CD8-positive, alpha-beta T cell (primary cell): ENCODE measurements at regions of chr5 and their contacts with region 1.

Region 1: GRCh38 chr5:95554647-95555548 is at the starts of genes ARSK and SKIC3:
- DNase-seq: peak; percentile 80 to 99 (median 91)
- ATAC-seq: peak; percentile 86
- H3K4me3 ChIP-seq: peak within 1 kb of the TSS; percentile 64 to 77
- H3K4me3 Mint-ChIP-seq: peak within 1 kb of the TSS; percentile 96
- H3K27ac ChIP-seq: peak within 1 kb of the TSS; percentile 74 to 84
- H3K27ac Mint-ChIP-seq: peak within 1 kb of the TSS; percentile 98
- H3K4me1 ChIP-seq: peaks cover 18% of the 10 kb centered on the region
- H3K4me1 Mint-ChIP-seq: peaks cover 47% of the 10 kb centered on the region
- H3K27me3 ChIP-seq: no peaks in the 10 kb centered on the region
- H3K27me3 Mint-ChIP-seq: no peaks in the 10 kb centered on the region
- CTCF ChIP-seq: no peak
- total RNA-seq, gene ARSK: 2.6 to 3.1 TPM
- total RNA-seq, gene SKIC3: 46.7 to 51.8 TPM

Region 2: GRCh38 chr5:94618493-94619328 is 936.2 kb before region 1 on chr5 and contains the starts of genes KIAA0825 and SLF1:
- CTCF ChIA-PET with region 1: no interaction called
- POLR2A ChIA-PET with region 1: no interaction called
- intact Hi-C with region 1: loop called in 1 of 2 experiments (anchors 5 kb)
- DNase-seq: peak; percentile 68 to 91 (median 86)
- ATAC-seq: peak; percentile 87
- H3K4me3 ChIP-seq: peak within 1 kb of the TSS; percentile 72 to 80
- H3K4me3 Mint-ChIP-seq: peak within 1 kb of the TSS; percentile 94
- H3K27ac ChIP-seq: peak within 1 kb of the TSS; percentile 59 to 74
- H3K27ac Mint-ChIP-seq: peak within 1 kb of the TSS; percentile 89
- H3K4me1 ChIP-seq: peaks cover 22% of the 10 kb centered on the region
- H3K4me1 Mint-ChIP-seq: peaks cover 53% of the 10 kb centered on the region
- H3K27me3 ChIP-seq: no peaks in the 10 kb centered on the region
- H3K27me3 Mint-ChIP-seq: no peaks in the 10 kb centered on the region
- CTCF ChIP-seq: no peak
- total RNA-seq, gene KIAA0825: 0.89 to 1.0 TPM
- total RNA-seq, gene SLF1: 10.0 to 11.1 TPM

Region 3: GRCh38 chr5:95572016-95572415 is 17.1 kb after region 1 on chr5:
- CTCF ChIA-PET with region 1: no interaction called
- POLR2A ChIA-PET with region 1: no interaction called
- intact Hi-C with region 1: no loop called
- DNase-seq: no peak
- ATAC-seq: no peak
- H3K4me3 ChIP-seq: no peak overlapping the region
- H3K4me3 Mint-ChIP-seq: no peak overlapping the region
- H3K27ac ChIP-seq: no peak overlapping the region
- H3K27ac Mint-ChIP-seq: no peak overlapping the region
- H3K4me1 ChIP-seq: no peaks in the 10 kb centered on the region
- H3K4me1 Mint-ChIP-seq: peaks cover 2% of the 10 kb centered on the region
- H3K27me3 ChIP-seq: no peaks in the 10 kb centered on the region
- H3K27me3 Mint-ChIP-seq: no peaks in the 10 kb centered on the region
- CTCF ChIP-seq: no peak

Region 4: DNA sequence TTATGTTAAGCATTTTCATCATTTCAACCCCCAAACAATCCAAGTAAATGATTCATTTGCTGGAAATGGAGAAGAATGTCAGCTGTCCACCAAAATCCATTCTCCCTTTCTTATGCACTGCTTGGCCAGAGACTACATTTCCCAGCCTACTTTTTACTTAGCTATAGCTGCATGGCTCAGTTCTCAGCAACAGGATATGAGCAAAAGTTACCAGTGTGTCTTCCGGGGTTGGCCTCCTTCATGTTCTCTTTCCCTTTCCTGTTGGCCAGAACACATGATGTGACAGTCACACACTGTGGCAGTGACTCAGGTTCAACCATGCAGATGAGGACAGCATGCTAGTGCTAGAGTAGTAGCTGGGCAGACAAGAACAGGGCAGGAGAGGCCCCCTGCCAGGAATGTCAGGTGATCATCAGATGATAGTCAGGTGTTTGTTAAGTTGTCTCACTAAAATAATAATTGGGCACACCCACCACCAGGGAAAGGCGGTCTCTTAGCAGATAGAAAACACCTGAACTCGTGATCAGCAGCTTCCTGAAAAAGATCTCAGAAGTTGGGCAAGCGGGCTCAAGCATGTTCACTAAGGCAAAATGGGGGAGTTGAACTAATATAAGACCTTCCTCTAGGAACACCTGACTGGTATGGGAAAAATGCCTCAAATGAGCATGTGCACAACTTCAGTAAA is 77.2 kb after region 1 on chr5:
- CTCF ChIA-PET with region 1: no interaction called
- POLR2A ChIA-PET with region 1: interaction called, 4 read pairs
- intact Hi-C with region 1: loop called in 1 of 2 experiments (anchors 2 kb)
- DNase-seq: peak; percentile 27 to 81 (median 64)
- ATAC-seq: peak; percentile 97
- H3K4me3 ChIP-seq: no peak overlapping the region
- H3K4me3 Mint-ChIP-seq: no peak overlapping the region
- H3K27ac ChIP-seq: peak overlapping the region; percentile 39 to 44
- H3K27ac Mint-ChIP-seq: peak overlapping the region; percentile 95
- H3K4me1 ChIP-seq: peaks cover 14% of the 10 kb centered on the region
- H3K4me1 Mint-ChIP-seq: peaks cover 15% of the 10 kb centered on the region
- H3K27me3 ChIP-seq: peaks cover 0 to 3% of the 10 kb centered on the region in 2 experiments
- H3K27me3 Mint-ChIP-seq: no peaks in the 10 kb centered on the region
- CTCF ChIP-seq: no peak

Region 5: DNA sequence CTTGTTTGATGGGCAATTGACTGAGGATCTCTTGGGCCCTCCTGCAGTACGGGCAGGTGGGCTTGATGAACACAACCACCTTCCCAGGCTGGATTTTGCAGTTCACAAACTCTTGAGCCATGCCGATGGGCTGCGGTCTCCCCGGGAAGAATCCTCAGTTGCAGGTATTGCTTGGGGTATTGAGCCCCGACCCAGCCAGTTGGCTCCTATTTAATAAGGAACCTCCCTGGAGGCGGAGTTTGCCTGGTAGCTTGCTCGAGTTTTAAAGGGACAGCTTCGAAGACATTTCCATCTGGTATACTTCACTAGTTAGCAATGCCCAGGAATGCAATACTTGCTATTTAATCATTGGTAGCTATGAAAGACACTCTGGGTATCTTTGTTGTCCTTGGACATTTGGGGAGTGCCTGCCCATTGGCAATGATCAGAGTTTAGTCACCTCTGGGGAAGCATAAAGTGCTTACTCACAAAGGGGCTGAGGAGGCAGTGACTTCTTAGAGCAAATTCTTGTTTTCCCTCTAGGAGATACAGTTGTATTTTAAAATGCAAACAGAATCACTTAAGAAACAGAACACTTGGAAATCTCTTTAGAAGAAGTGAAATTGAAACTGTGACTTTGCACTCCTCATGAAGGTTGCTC is 267.8 kb after region 1 on chr5 and contains the start of gene GLRX:
- CTCF ChIA-PET with region 1: no interaction called
- POLR2A ChIA-PET with region 1: no interaction called
- intact Hi-C with region 1: loop called (anchors 2 to 10 kb)
- DNase-seq: peak in 8 of 9 experiments; percentile 42 to 75 (median 60)
- ATAC-seq: peak; percentile 39
- H3K4me3 ChIP-seq: peak within 1 kb of the TSS; percentile 89 to 91
- H3K4me3 Mint-ChIP-seq: peak within 1 kb of the TSS; percentile 98
- H3K27ac ChIP-seq: peak within 1 kb of the TSS; percentile 65 to 84
- H3K27ac Mint-ChIP-seq: peak within 1 kb of the TSS; percentile 96
- H3K4me1 ChIP-seq: peaks cover 52% of the 10 kb centered on the region
- H3K4me1 Mint-ChIP-seq: peaks cover 66% of the 10 kb centered on the region
- H3K27me3 ChIP-seq: no peaks in the 10 kb centered on the region
- H3K27me3 Mint-ChIP-seq: no peaks in the 10 kb centered on the region
- CTCF ChIP-seq: no peak
- total RNA-seq, gene GLRX: 17.9 to 19.5 TPM

Region 6: DNA sequence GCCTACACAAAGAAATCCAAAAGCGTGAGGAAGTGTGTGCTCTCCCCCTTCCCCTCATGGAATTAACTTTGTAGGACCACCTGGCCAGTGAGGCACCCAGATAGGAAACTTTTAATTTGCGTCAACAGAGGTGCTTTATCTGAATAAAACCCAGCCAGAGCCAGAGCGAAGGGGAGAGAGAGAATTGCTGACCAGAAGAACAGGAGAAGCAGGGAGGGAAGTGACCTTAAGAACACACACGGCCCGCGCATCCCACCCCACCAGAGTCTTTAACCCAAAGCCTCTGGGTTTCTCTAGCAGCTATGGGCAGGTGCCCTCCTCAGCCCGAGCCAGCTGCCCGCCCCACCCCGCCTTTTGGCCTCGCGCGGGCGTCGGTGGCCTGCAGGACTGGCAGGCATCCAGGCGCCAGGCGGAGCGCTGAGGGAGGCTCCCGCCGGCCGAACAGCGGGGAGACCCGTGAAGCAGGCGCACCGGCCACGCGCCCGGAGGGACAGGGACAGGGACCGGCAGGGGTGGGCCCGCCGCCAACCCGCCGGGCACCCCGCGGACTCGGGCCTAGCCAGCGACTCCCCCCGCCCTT is 1252.3 kb after region 1 on chr5:
- CTCF ChIA-PET with region 1: no interaction called
- POLR2A ChIA-PET with region 1: no interaction called
- intact Hi-C with region 1: loop called (anchors 10 kb)
- DNase-seq: peak in 2 of 9 experiments; percentile 9 to 32
- ATAC-seq: no peak
- H3K4me3 ChIP-seq: peak overlapping the region; percentile 71 to 85
- H3K4me3 Mint-ChIP-seq: peak overlapping the region; percentile 95
- H3K27ac ChIP-seq: peak overlapping the region; percentile 93 to 96
- H3K27ac Mint-ChIP-seq: peak overlapping the region; percentile 98
- H3K4me1 ChIP-seq: peaks cover 70% of the 10 kb centered on the region
- H3K4me1 Mint-ChIP-seq: peaks cover 82% of the 10 kb centered on the region
- H3K27me3 ChIP-seq: no peaks in the 10 kb centered on the region
- H3K27me3 Mint-ChIP-seq: no peaks in the 10 kb centered on the region
- CTCF ChIP-seq: no peak